ENCODE measurements at regions of chr1 and their contacts with region 1.

Region 1: GRCh38 chr1:26321315-26322041 is 3.7 kb downstream of the CD52 start:
- DNase-seq: peak; percentile 57
- ATAC-seq: peak; percentile 76
- H3K4me3 ChIP-seq: no peak overlapping the region
- H3K27ac ChIP-seq: peak overlapping the region; percentile 4; the same call in 1 of the 2 replicates
- H3K4me1 ChIP-seq: peaks cover 26% of the 10 kb centered on the region
- H3K27me3 ChIP-seq: no peaks in the 10 kb centered on the region
- CTCF ChIP-seq: peak; percentile 94 to 98 (median 94)
- EP300 ChIP-seq: no peak
- POLR2A ChIP-seq: no peak
- RAD21 ChIP-seq: peak; percentile 99

Region 2: DNA sequence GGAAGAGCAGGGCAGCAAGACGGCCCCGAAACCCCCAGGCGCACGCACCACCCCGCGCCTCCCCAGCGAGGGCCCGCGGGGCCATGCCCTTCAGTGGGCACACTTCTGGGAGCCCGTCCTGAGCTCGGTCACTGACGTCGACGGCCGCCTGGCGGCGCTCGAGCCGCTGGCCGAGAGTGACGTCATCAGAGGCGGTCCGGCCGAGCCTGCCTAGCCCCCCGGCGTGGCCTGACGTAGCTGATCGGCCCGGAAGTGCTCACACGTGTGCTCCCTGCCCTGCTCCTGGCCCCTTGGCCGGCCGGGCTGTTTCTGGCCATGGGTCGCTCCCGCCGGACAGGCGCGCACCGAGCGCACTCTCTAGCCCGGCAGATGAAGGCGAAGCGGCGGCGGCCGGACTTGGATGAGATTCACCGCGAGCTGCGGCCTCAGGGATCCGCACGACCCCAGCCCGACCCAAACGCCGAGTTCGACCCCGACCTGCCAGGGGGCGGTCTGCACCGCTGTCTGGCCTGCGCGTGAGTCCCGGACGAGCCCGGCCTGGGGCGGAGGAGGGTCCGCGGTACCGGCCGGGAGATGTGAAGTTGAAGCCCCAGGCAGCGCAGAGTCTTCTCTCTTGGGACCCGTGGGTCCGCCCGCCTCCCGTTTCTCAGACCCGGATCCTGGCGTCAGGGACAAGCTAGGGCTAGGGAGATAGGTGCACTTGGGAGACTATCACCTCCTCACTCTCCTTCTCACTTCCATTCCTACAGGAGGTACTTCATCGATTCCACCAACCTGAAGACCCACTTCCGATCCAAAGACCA is 151.6 kb before region 1 on chr1 and contains the start of gene ZNF593:
- CTCF ChIA-PET with region 1: interaction called, 5 read pairs
- POLR2A ChIA-PET with region 1: no interaction called
- RAD21 ChIA-PET with region 1: interaction called, 8 read pairs
- SMC1A ChIA-PET with region 1: interaction called, 8 read pairs
- in situ Hi-C with region 1: loop called (anchors 5 kb)
- intact Hi-C with region 1: loop called (anchors 5 kb)
- DNase-seq: peak; percentile 61
- ATAC-seq: peak; percentile 98
- H3K4me3 ChIP-seq: peak within 1 kb of the TSS; percentile 97
- H3K27ac ChIP-seq: peak within 1 kb of the TSS; percentile 79
- H3K4me1 ChIP-seq: peaks cover 7% of the 10 kb centered on the region
- H3K27me3 ChIP-seq: no peaks in the 10 kb centered on the region
- CTCF ChIP-seq: peak; percentile 93 to 98 (median 95)
- EP300 ChIP-seq: no peak
- POLR2A ChIP-seq: peak; percentile 92
- RAD21 ChIP-seq: peak; percentile 36; the same call in 1 of the 2 replicates
- polyA plus RNA-seq, gene ZNF593: 7.7 to 20.1 TPM

Region 3: GRCh38 chr1:26200413-26200812 is 121.1 kb before region 1 on chr1:
- CTCF ChIA-PET with region 1: no interaction called
- POLR2A ChIA-PET with region 1: no interaction called
- RAD21 ChIA-PET with region 1: no interaction called
- SMC1A ChIA-PET with region 1: no interaction called
- in situ Hi-C with region 1: no loop called
- intact Hi-C with region 1: no loop called
- DNase-seq: no peak
- ATAC-seq: no peak
- H3K4me3 ChIP-seq: no peak overlapping the region
- H3K27ac ChIP-seq: no peak overlapping the region
- H3K4me1 ChIP-seq: no peaks in the 10 kb centered on the region
- H3K27me3 ChIP-seq: peaks cover 0 to 3% of the 10 kb centered on the region in 2 experiments; a peak in 2 of 4 replicates
- CTCF ChIP-seq: no peak
- EP300 ChIP-seq: no peak
- POLR2A ChIP-seq: no peak
- RAD21 ChIP-seq: no peak

Region 4: DNA sequence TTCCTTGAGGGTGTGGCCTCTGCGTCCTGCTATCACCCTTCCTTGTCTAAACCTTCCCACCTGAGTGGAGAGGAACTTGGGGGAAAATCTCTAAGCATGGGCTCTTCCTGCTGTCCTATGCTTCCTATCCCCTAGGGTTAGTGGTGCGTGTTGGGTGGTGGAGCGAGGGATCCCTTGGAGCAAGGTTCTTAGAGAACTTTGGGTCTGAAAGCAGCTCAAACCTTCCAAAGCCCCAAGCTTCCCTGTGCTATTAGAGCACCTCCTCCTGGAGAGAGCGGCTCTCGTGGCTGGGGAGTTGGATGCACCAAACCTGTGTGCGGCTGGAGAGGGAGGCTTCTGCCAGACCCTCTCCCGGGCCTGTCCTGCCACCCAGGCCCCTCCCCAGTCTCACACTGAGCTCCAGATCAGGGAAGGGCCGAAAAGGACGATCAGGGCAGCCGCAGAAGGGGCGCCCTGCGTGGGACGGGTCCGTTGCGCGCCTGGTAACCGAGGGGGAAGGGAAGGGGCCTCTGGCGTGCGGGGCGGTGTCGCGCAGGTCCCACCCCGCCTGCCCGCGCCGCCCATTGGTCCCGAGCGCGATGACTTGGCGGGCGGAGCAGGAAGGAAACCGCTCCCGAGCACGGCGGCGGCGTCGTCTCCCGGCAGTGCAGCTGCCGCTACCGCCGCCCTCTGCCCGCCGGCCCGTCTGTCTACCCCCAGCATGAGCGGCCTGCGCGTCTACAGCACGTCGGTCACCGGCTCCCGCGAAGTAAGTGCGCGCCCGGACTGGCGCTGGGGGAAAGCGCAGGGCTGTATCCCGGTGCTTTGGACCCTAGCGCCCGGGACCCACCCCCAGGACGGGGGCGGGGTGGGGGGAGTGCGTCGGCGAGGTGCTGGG is 41.8 kb before region 1 on chr1 and contains the start of gene SH3BGRL3:
- CTCF ChIA-PET with region 1: interaction called, 879 read pairs
- POLR2A ChIA-PET with region 1: interaction called, 253 read pairs
- RAD21 ChIA-PET with region 1: interaction called, 477 read pairs
- SMC1A ChIA-PET with region 1: interaction called, 474 read pairs
- in situ Hi-C with region 1: no loop called
- intact Hi-C with region 1: loop called (anchors 1 kb)
- DNase-seq: no peak
- ATAC-seq: peak; percentile 92
- H3K4me3 ChIP-seq: peak within 1 kb of the TSS; percentile 88
- H3K27ac ChIP-seq: peak within 1 kb of the TSS; percentile 87
- H3K4me1 ChIP-seq: peaks cover 53% of the 10 kb centered on the region
- H3K27me3 ChIP-seq: no peaks in the 10 kb centered on the region
- CTCF ChIP-seq: peak; percentile 22 to 47 (median 41); a peak in 4 of 6 replicates
- EP300 ChIP-seq: no peak
- POLR2A ChIP-seq: peak; percentile 96
- RAD21 ChIP-seq: no peak
- polyA plus RNA-seq, gene SH3BGRL3: 121 to 129 TPM

Region 5: GRCh38 chr1:26306290-26307229 is 14.9 kb before region 1 on chr1 and contains the start of gene UBXN11:
- CTCF ChIA-PET with region 1: interaction called, 8 read pairs
- POLR2A ChIA-PET with region 1: interaction called, 58 read pairs
- RAD21 ChIA-PET with region 1: interaction called, 27 read pairs
- SMC1A ChIA-PET with region 1: interaction called, 40 read pairs
- in situ Hi-C with region 1: no loop called
- intact Hi-C with region 1: no loop called
- DNase-seq: peak; percentile 87
- ATAC-seq: peak; percentile 100
- H3K4me3 ChIP-seq: peak within 1 kb of the TSS; percentile 92
- H3K27ac ChIP-seq: peak within 1 kb of the TSS; percentile 94
- H3K4me1 ChIP-seq: peaks cover 14% of the 10 kb centered on the region
- H3K27me3 ChIP-seq: no peaks in the 10 kb centered on the region
- CTCF ChIP-seq: no peak
- EP300 ChIP-seq: no peak
- POLR2A ChIP-seq: peak; percentile 66
- RAD21 ChIP-seq: no peak
- polyA plus RNA-seq, gene UBXN11: 0.32 to 1.2 TPM

Region 6: GRCh38 chr1:26378088-26378878 is 56.8 kb after region 1 on chr1:
- CTCF ChIA-PET with region 1: interaction called, 10 read pairs
- POLR2A ChIA-PET with region 1: interaction called, 7 read pairs
- RAD21 ChIA-PET with region 1: interaction called, 24 read pairs
- SMC1A ChIA-PET with region 1: interaction called, 9 read pairs
- in situ Hi-C with region 1: no loop called
- intact Hi-C with region 1: no loop called
- DNase-seq: peak; percentile 73
- ATAC-seq: peak; percentile 97
- H3K4me3 ChIP-seq: peak overlapping the region; percentile 19; the same call in 1 of the 2 replicates
- H3K27ac ChIP-seq: peak overlapping the region; percentile 38
- H3K4me1 ChIP-seq: peaks cover 22% of the 10 kb centered on the region
- H3K27me3 ChIP-seq: no peaks in the 10 kb centered on the region
- CTCF ChIP-seq: no peak
- EP300 ChIP-seq: peak in 1 of 2 experiments; percentile 63; a peak in 2 of 4 replicates
- POLR2A ChIP-seq: no peak
- RAD21 ChIP-seq: no peak

Region 7: GRCh38 chr1:26399034-26399433 is 77.6 kb after region 1 on chr1:
- CTCF ChIA-PET with region 1: interaction called, 11 read pairs
- POLR2A ChIA-PET with region 1: no interaction called
- RAD21 ChIA-PET with region 1: interaction called, 6 read pairs
- SMC1A ChIA-PET with region 1: interaction called, 5 read pairs
- in situ Hi-C with region 1: no loop called
- intact Hi-C with region 1: no loop called
- DNase-seq: no peak
- ATAC-seq: no peak
- H3K4me3 ChIP-seq: no peak overlapping the region
- H3K27ac ChIP-seq: no peak overlapping the region
- H3K4me1 ChIP-seq: no peaks in the 10 kb centered on the region
- H3K27me3 ChIP-seq: no peaks in the 10 kb centered on the region
- CTCF ChIP-seq: no peak
- EP300 ChIP-seq: no peak
- POLR2A ChIP-seq: no peak
- RAD21 ChIP-seq: no peak

Region 8: DNA sequence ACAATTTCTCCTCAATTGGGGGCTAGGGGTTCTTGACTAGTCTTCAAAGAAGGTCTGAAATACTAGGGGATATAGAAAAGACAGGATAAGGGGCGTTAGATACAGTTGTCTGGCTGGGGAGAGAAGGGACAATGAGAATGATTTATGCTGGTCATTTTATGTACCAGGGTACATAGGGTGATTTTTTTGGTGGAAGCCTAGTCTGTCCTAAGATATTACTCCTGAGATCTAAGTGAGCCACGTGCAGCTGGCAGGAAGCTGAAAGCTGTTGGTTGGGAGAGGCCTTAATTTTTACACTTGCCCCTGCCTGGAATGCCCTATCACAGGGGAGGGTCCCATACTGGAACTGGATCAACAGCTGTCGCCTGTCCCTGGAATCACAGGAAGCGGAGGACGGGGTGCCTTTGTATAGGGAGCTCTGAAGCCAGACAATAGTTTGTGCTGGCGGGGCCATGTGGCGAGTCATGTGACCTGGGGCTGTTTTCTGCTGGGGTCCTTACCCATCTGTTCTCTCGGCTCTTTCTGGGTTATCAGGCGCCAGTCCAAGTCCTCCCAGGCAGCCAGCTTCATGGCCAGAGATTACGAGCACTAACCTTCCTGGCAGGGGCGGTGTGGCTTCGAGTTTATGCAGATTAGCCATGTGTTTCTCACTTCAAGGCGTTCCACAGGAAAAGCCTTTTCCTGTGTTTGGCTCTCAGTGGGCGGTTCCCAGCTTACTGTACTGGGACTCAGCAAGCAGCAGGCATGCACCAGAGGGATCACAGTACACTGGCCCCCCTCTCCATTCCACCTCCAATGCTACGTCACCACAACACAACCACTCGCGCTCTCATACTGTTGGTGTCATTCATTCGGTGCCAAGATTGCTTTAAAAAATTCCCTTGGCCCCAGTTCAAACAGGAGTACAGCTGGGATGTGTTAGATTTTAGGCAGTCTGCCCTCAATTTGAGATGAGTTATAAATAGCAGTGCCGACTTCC is 401.8 kb after region 1 on chr1:
- CTCF ChIA-PET with region 1: no interaction called
- POLR2A ChIA-PET with region 1: no interaction called
- RAD21 ChIA-PET with region 1: no interaction called
- SMC1A ChIA-PET with region 1: no interaction called
- in situ Hi-C with region 1: no loop called
- intact Hi-C with region 1: no loop called
- DNase-seq: no peak
- ATAC-seq: peak; percentile 61
- H3K4me3 ChIP-seq: peak overlapping the region; percentile 49
- H3K27ac ChIP-seq: peak overlapping the region; percentile 72
- H3K4me1 ChIP-seq: peaks cover 53% of the 10 kb centered on the region
- H3K27me3 ChIP-seq: no peaks in the 10 kb centered on the region
- CTCF ChIP-seq: no peak
- EP300 ChIP-seq: no peak
- POLR2A ChIP-seq: 0 out of 2 replicates have a peak, but pooled peaks have one; percentile 36
- RAD21 ChIP-seq: no peak